ENCODE measurements at regions of chr12 and their contacts with region 1.

Region 1: GRCh38 chr12:3803865-3804472 is 51.1 kb upstream of the CRACR2A start:
- DNase-seq: peak; percentile 90
- H3K4me3 Mint-ChIP-seq: no peak overlapping the region
- H3K27ac Mint-ChIP-seq: no peak overlapping the region
- H3K4me1 Mint-ChIP-seq: peaks cover 9% of the 10 kb centered on the region
- H3K27me3 Mint-ChIP-seq: no peaks in the 10 kb centered on the region

Region 2: DNA sequence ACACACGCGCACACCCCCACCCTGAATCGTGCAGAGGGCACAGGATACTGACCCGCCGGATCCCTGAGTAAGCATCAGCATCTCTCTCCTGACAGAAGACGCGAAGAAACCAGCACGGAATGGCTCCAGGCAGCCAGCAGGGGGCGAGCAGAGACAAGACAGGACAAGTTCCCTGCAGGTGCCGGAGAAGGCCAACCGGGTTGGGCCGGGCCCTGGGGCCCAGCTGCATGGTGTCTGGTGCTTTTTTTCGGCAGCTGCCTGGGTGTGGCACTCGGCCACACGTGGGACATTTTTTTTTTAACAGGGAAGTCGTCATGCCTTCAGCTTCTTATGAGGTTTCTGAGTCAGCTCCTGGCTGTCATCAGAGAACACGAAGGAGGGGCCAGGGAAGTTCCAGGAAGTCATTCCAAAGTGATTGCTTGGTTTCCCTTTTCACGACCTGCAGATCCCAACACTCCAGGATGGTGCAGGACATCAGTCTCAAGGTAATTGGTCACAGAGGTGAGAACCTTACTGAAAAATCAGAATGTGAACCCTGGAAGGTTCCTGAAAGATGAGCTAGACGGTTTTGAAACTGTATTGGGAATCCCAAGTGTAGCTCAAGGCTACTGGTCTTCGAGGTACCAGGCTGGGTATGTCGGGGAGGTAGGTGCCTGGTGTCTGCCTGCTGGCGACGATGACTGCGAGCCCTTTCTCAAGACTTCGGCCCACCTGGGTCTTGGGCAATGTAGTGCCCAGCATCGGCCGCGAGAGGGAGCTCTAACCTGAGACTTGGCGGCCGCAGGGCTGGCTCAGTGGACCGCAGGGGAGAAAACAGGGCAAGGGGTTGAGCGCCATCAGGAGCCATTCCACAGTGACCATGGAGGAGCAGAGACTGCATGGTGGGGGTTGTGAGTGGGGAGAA is 503.8 kb before region 1 on chr12:
- intact Hi-C with region 1: loop called (anchors 1 kb)
- DNase-seq: peak; percentile 94
- H3K4me3 Mint-ChIP-seq: peak overlapping the region; percentile 64
- H3K27ac Mint-ChIP-seq: peak overlapping the region; percentile 78
- H3K4me1 Mint-ChIP-seq: peaks cover 11% of the 10 kb centered on the region
- H3K27me3 Mint-ChIP-seq: peaks cover 3% of the 10 kb centered on the region

Region 3: GRCh38 chr12:3658327-3659163 is 145.4 kb before region 1 on chr12:
- intact Hi-C with region 1: loop called (anchors 2 kb)
- DNase-seq: peak; percentile 78
- H3K4me3 Mint-ChIP-seq: no peak overlapping the region
- H3K27ac Mint-ChIP-seq: no peak overlapping the region
- H3K4me1 Mint-ChIP-seq: no peaks in the 10 kb centered on the region
- H3K27me3 Mint-ChIP-seq: no peaks in the 10 kb centered on the region

Region 4: DNA sequence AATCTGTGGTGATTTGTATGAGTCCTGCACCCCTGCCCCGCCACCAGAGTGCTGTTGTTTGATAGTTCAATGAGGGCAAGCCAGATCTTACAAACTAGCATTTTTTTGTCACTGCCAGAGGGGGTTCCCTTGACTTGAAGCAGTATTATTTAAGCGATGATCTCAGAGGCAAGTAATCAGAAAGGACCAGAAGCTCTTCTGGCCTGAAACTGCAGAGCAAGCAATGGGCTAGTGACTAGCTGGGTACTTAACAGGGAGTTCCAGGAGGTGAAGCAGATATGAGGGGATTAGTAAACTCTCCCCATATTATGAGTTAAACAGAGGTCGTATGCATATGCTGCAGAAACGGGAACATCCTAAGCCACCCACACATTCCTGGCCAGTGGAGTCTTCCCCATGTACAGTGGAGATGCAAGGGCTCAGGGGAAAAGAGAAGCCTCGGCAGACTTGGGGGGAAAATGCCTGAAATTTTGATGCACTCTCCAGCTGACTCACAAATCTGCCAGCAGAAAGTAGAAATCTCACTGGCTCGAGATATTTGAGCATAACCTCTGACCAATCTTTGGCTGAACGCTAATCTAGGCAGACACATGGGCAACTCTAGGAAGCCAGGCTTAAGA is 42.7 kb before region 1 on chr12:
- intact Hi-C with region 1: no loop called
- DNase-seq: peak; percentile 28
- H3K4me3 Mint-ChIP-seq: no peak overlapping the region
- H3K27ac Mint-ChIP-seq: no peak overlapping the region
- H3K4me1 Mint-ChIP-seq: peaks cover 7% of the 10 kb centered on the region
- H3K27me3 Mint-ChIP-seq: no peaks in the 10 kb centered on the region

Measured in activated CD4-positive, alpha-beta T cell treated with anti-CD3 and anti-CD28 coated beads, Interleukin-2, amount 10 ng/mL, durations not matched to agents 24 days and 14 days (primary cell).